ENCODE measurements at regions of chr9 and their contacts with region 1.

Region 1: DNA sequence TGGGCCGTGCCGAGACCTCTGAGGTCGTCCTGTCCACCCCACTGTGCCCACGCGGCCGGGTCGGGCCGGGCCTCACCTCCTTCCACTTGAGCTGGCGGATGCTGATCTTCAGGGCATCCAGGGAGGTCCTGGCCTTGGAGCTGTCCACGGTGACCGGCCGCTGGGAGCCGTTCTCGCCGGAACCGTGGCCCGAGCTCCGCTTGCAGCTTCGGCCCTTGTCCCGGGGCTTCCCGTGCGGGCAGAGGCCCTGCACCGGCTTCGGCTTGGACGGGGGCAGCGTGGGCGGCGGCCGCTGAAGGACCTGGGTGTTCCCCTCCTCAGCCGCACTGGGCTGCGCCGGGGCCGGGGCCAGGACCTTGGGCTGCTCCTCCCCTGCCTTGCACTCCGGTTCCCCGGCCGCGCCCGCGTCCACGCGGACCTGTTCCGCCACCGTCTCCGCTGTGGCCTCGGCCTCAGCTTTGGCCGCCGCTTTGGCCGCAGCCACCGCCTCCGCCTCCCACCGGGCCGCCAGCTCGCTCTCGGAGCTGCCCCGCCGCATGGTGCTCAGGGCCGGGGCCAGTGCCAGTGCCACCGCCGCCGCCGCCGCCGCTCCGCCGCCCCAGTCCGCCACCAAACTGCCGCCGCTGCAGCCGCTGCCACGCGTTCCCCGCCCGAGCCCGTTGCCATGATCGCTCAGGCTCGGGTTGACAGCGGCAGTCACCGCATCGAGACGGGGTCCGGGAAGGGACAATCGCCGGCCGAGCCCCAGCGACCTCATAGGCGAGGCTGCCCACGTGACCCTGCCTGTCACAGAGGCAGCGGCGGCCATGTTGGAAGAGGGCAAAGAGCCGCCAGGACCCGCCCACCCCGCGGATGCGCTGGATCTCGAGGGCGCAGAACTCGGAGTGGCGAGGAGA is at the start of gene TTLL11:
- DNase-seq: peak; percentile 93 to 97 (median 97)
- ATAC-seq: peak; percentile 94
- H3K4me3 ChIP-seq: peak within 1 kb of the TSS; percentile 51 to 77
- H3K4me3 Mint-ChIP-seq: peak within 1 kb of the TSS; percentile 92
- H3K27ac ChIP-seq: peak within 1 kb of the TSS in 1 of 2 experiments; percentile 36
- H3K27ac Mint-ChIP-seq: peak within 1 kb of the TSS; percentile 58
- H3K4me1 ChIP-seq: peaks cover 24% of the 10 kb centered on the region
- H3K4me1 Mint-ChIP-seq: peaks cover 52% of the 10 kb centered on the region
- H3K27me3 ChIP-seq: no peaks in the 10 kb centered on the region
- H3K27me3 Mint-ChIP-seq: no peaks in the 10 kb centered on the region
- CTCF ChIP-seq: no peak
- total RNA-seq, gene TTLL11: 0.68 to 1.00 TPM

Region 2: GRCh38 chr9:120579750-120580590 is 1512.9 kb before region 1 on chr9 and contains the start of gene CDK5RAP2:
- CTCF ChIA-PET with region 1: no interaction called
- POLR2A ChIA-PET with region 1: no interaction called
- intact Hi-C with region 1: loop called in 1 of 2 experiments (anchors 1 kb)
- DNase-seq: peak; percentile 83 to 98 (median 91)
- ATAC-seq: peak; percentile 98
- H3K4me3 ChIP-seq: peak within 1 kb of the TSS; percentile 63 to 86
- H3K4me3 Mint-ChIP-seq: peak within 1 kb of the TSS; percentile 92
- H3K27ac ChIP-seq: peak within 1 kb of the TSS; percentile 68 to 77
- H3K27ac Mint-ChIP-seq: peak within 1 kb of the TSS; percentile 95
- H3K4me1 ChIP-seq: peaks cover 25% of the 10 kb centered on the region
- H3K4me1 Mint-ChIP-seq: peaks cover 56% of the 10 kb centered on the region
- H3K27me3 ChIP-seq: no peaks in the 10 kb centered on the region
- H3K27me3 Mint-ChIP-seq: no peaks in the 10 kb centered on the region
- CTCF ChIP-seq: no peak
- total RNA-seq, gene CDK5RAP2: 52.1 to 55.2 TPM

Region 3: DNA sequence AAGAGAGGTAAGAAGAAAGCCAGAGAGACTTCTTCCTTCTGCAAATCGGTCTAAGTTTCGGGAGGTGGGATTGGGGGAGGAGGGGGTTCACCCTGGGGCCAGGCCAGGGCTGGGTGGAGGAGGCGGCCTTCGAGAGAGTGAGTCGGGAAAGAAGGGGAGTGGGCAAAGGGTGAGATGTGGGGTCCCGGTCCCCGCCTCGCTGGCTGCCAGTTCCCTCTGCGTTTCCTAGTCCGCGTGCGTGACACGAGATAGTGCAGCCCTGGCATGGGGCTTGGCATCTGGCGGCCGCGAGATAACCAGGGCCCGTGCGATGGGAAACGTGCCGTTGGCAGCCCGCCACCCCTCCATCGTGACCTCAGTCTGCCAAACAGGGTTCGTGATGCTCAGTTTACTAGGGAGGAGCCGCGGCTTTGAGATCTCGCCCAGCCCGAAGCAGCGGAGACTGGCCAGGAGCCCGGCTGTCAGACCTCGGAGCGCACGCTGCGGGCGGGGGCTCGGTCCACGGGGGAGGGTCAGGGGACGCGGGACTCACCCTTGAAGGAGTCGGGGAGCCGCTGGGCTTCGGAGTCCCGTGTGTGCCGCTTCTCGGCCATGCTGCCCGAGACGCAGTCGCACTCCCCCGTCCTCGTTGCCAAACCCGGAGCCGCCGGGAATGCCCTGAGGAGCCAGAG is 723.1 kb before region 1 on chr9 and contains the start of gene STOM:
- CTCF ChIA-PET with region 1: no interaction called
- POLR2A ChIA-PET with region 1: no interaction called
- intact Hi-C with region 1: loop called in 1 of 2 experiments (anchors 5 kb)
- DNase-seq: peak in 8 of 9 experiments; percentile 35 to 87 (median 68)
- ATAC-seq: peak; percentile 53
- H3K4me3 ChIP-seq: peak within 1 kb of the TSS; percentile 86 to 96
- H3K4me3 Mint-ChIP-seq: peak within 1 kb of the TSS; percentile 92
- H3K27ac ChIP-seq: peak within 1 kb of the TSS; percentile 67 to 90
- H3K27ac Mint-ChIP-seq: peak within 1 kb of the TSS; percentile 90
- H3K4me1 ChIP-seq: peaks cover 11% of the 10 kb centered on the region
- H3K4me1 Mint-ChIP-seq: peaks cover 66% of the 10 kb centered on the region
- H3K27me3 ChIP-seq: no peaks in the 10 kb centered on the region
- H3K27me3 Mint-ChIP-seq: no peaks in the 10 kb centered on the region
- CTCF ChIP-seq: no peak
- total RNA-seq, gene STOM: 47.4 to 48.2 TPM

Region 4: DNA sequence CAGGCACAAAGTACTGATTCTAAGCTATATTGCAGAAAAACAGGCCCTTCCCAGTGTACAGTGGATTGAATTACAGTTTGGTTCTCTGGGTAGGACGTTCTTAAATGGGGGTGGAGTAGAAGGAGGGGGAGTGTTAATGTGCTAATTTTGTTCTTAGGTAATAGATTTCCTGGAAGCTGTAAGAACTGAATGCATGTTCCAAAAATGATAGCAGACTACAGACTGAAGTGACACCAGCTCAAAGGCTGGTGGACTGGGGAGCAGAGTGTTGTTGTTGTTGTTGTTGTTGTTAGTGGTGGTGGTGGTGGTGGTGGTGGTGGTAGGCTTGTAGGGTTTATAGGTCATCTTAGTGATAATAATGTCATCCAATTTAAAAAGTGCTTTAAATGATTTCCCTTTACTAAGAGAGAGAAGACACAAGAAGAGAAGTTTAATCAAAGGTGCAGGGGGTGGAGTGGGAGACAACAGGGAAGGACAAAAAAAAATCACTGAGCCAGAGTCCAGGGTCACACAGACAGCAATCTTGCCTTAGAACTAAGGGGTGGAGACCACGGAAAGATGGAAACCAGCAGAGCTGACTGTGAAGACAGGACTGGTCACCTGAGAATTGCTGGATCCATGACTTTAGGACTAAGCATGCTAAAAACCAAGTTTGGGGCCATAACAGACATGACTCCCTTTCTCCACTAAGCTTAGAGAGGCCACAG is 26.8 kb before region 1 on chr9:
- CTCF ChIA-PET with region 1: no interaction called
- POLR2A ChIA-PET with region 1: no interaction called
- intact Hi-C with region 1: no loop called
- DNase-seq: no peak
- ATAC-seq: no peak
- H3K4me3 ChIP-seq: no peak overlapping the region
- H3K4me3 Mint-ChIP-seq: no peak overlapping the region
- H3K27ac ChIP-seq: no peak overlapping the region
- H3K27ac Mint-ChIP-seq: no peak overlapping the region
- H3K4me1 ChIP-seq: no peaks in the 10 kb centered on the region
- H3K4me1 Mint-ChIP-seq: peaks cover 7% of the 10 kb centered on the region
- H3K27me3 ChIP-seq: no peaks in the 10 kb centered on the region
- H3K27me3 Mint-ChIP-seq: no peaks in the 10 kb centered on the region
- CTCF ChIP-seq: no peak

Region 5: GRCh38 chr9:122159026-122159924 is 66.4 kb after region 1 on chr9 and contains the starts of genes MORN5 and NDUFA8:
- CTCF ChIA-PET with region 1: no interaction called
- POLR2A ChIA-PET with region 1: no interaction called
- intact Hi-C with region 1: loop called (anchors 1 kb)
- DNase-seq: peak; percentile 90 to 98 (median 96)
- ATAC-seq: peak; percentile 96
- H3K4me3 ChIP-seq: peak within 1 kb of the TSS; percentile 68 to 99
- H3K4me3 Mint-ChIP-seq: peak within 1 kb of the TSS; percentile 99
- H3K27ac ChIP-seq: peak within 1 kb of the TSS; percentile 74 to 86
- H3K27ac Mint-ChIP-seq: peak within 1 kb of the TSS; percentile 98
- H3K4me1 ChIP-seq: peaks cover 27% of the 10 kb centered on the region
- H3K4me1 Mint-ChIP-seq: peaks cover 42% of the 10 kb centered on the region
- H3K27me3 ChIP-seq: no peaks in the 10 kb centered on the region
- H3K27me3 Mint-ChIP-seq: peaks cover 14% of the 10 kb centered on the region
- CTCF ChIP-seq: no peak
- total RNA-seq, gene MORN5: not detected
- total RNA-seq, gene NDUFA8: 5.7 to 7.0 TPM

Region 6: GRCh38 chr9:122580360-122580759 is 487.5 kb after region 1 on chr9:
- CTCF ChIA-PET with region 1: no interaction called
- POLR2A ChIA-PET with region 1: no interaction called
- intact Hi-C with region 1: no loop called
- DNase-seq: no peak
- ATAC-seq: no peak
- H3K4me3 ChIP-seq: no peak overlapping the region
- H3K4me3 Mint-ChIP-seq: no peak overlapping the region
- H3K27ac ChIP-seq: no peak overlapping the region
- H3K27ac Mint-ChIP-seq: no peak overlapping the region
- H3K4me1 ChIP-seq: no peaks in the 10 kb centered on the region
- H3K4me1 Mint-ChIP-seq: no peaks in the 10 kb centered on the region
- H3K27me3 ChIP-seq: no peaks in the 10 kb centered on the region
- H3K27me3 Mint-ChIP-seq: no peaks in the 10 kb centered on the region
- CTCF ChIP-seq: no peak

Region 7: GRCh38 chr9:122904823-122905710 is 812.2 kb after region 1 on chr9 and contains the start of gene RC3H2:
- CTCF ChIA-PET with region 1: no interaction called
- POLR2A ChIA-PET with region 1: no interaction called
- intact Hi-C with region 1: loop called in 1 of 2 experiments (anchors 5 kb)
- DNase-seq: peak; percentile 92 to 100 (median 97)
- ATAC-seq: peak; percentile 91
- H3K4me3 ChIP-seq: peak within 1 kb of the TSS; percentile 66 to 92
- H3K4me3 Mint-ChIP-seq: peak within 1 kb of the TSS; percentile 94
- H3K27ac ChIP-seq: peak within 1 kb of the TSS; percentile 67 to 94
- H3K27ac Mint-ChIP-seq: peak within 1 kb of the TSS; percentile 98
- H3K4me1 ChIP-seq: peaks cover 32% of the 10 kb centered on the region
- H3K4me1 Mint-ChIP-seq: peaks cover 26% of the 10 kb centered on the region
- H3K27me3 ChIP-seq: no peaks in the 10 kb centered on the region
- H3K27me3 Mint-ChIP-seq: no peaks in the 10 kb centered on the region
- CTCF ChIP-seq: no peak
- total RNA-seq, gene RC3H2: 77.6 to 79.5 TPM